GM10248 (cell line): ENCODE measurements at regions of chr9 and their contacts with region 1.

Region 1: GRCh38 chr9:84697509-84698114 is 28.1 kb downstream of the NTRK2 start:
- DNase-seq: peak; percentile 69
- CTCF ChIP-seq: peak; percentile 93

Region 2: GRCh38 chr9:84677092-84677491 is 20.5 kb before region 1 on chr9:
- CTCF ChIA-PET with region 1: interaction called, 10 read pairs
- POLR2A ChIA-PET with region 1: no interaction called
- DNase-seq: no peak
- CTCF ChIP-seq: no peak

Region 3: GRCh38 chr9:84686068-84686467 is 11.5 kb before region 1 on chr9:
- CTCF ChIA-PET with region 1: interaction called, 18 read pairs
- POLR2A ChIA-PET with region 1: no interaction called
- DNase-seq: no peak
- CTCF ChIP-seq: no peak

Region 4: DNA sequence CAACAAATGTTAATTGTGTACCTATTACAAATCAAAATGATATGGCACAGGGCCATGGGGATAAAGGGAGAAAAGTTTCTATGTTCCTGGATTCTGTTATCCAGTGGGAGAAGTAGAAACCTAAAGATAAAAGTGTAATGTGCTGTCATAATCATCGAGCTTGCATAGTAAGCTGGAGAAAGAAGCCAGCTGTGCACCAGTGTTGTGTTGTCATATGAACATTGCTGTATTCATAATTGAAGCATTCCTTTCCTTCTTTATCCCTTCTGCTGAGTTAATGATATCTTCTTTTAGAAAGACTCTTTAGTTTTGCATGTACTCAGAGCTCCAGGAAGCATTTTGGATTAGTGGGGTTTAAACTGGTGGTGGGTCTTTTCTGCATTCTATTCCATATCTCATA is 11.4 kb after region 1 on chr9:
- CTCF ChIA-PET with region 1: interaction called, 18 read pairs
- POLR2A ChIA-PET with region 1: no interaction called
- DNase-seq: no peak
- CTCF ChIP-seq: no peak

Region 5: DNA sequence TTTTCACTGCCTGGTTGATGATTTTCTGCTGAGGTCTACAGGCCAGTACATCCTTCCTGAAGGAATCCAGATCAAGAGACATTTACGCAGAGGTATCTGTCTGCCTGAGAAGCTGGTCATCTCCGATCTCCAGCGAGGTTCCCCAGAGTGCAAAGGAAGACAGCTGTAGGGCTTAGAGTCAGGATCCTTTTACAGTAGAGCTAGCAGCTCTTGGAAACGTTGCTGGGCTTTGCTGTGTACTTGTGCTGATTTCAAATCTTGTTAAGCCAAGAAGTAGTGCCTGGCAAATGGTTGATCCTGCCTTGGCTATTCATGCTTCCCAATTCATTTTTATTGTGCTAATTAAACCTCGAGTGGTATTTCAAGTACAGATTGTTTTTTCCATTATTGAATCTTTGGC is 20.9 kb after region 1 on chr9:
- CTCF ChIA-PET with region 1: interaction called, 13 read pairs
- POLR2A ChIA-PET with region 1: no interaction called
- DNase-seq: no peak
- CTCF ChIP-seq: no peak

Region 6: GRCh38 chr9:84781458-84781857 is 83.8 kb after region 1 on chr9:
- CTCF ChIA-PET with region 1: interaction called, 174 read pairs
- POLR2A ChIA-PET with region 1: interaction called, 3 read pairs
- DNase-seq: peak; percentile 13
- CTCF ChIP-seq: peak; percentile 45